Pancreas (tissue), 10 donors: ENCODE measurements at regions of chr12 and their contacts with region 1.

Region 1: DNA sequence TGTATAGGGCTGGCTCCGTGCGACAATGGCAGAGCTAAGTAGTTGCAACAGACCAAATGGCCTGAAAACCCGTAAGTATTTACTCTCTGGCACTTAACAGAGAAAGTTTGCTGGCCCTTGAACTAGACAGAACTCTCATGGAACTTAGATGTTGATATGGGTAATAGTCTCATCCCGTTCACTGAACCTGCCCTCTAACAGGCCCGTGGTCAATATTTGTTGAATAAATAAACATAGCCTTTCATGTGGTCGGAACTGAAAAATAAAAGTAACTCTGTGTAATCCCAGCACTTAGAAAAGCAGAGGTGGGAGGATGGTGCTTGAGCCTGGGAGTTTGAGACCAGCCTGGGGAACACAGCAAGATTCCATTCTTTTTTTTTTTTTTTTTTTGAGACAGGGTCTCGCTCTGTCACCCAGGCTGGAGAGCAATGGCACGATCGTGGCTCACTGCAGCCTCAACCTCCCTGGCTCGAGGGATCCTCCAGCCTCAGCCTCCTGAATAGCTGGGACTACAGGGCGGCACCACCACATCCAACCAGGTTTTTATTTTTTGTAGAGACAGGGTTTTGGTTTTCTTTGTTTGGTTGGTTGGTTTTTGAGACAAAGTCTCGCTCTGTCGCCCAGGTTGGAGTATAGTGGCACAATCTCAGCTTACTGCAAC is 29.7 kb downstream of the KDM2B start:
- DNase-seq: peak in 1 of 6 donors; percentile 9
- ATAC-seq: no peak
- H3K4me3 ChIP-seq: no peak overlapping the region
- H3K27ac ChIP-seq: no peak overlapping the region
- H3K4me1 ChIP-seq: no peaks in the 10 kb centered on the region
- H3K27me3 ChIP-seq: no peaks in the 10 kb centered on the region
- CTCF ChIP-seq: no peak

Region 2: GRCh38 chr12:121230538-121230907 is 320.6 kb before region 1 on chr12:
- intact Hi-C with region 1: no loop called
- DNase-seq: peak in 2 of 6 donors; percentile 20 to 49
- ATAC-seq: no peak
- H3K4me3 ChIP-seq: no peak overlapping the region
- H3K27ac ChIP-seq: no peak overlapping the region
- H3K4me1 ChIP-seq: peaks cover 16 to 21% (median 16%) of the 10 kb centered on the region in 3 donors
- H3K27me3 ChIP-seq: no peaks in the 10 kb centered on the region
- CTCF ChIP-seq: no peak

Region 3: GRCh38 chr12:121678716-121679580 is 127.8 kb after region 1 on chr12:
- intact Hi-C with region 1: loop called (anchors 2 to 10 kb)
- DNase-seq: peak in 1 of 6 donors; percentile 3
- ATAC-seq: peak in 1 of 4 donors; percentile 17
- H3K4me3 ChIP-seq: no peak overlapping the region
- H3K27ac ChIP-seq: peak overlapping the region in 1 of 4 donors; percentile 2
- H3K4me1 ChIP-seq: no peaks in the 10 kb centered on the region
- H3K27me3 ChIP-seq: no peaks in the 10 kb centered on the region
- CTCF ChIP-seq: no peak